ENCODE measurements at regions of chr19 and their contacts with region 1.

Region 1: GRCh38 chr19:39599116-39599515 is 3.2 kb upstream of the LGALS13 start:
- DNase-seq: peak; percentile 23
- H3K4me3 ChIP-seq: no peak overlapping the region
- H3K27ac ChIP-seq: no peak overlapping the region
- H3K4me1 ChIP-seq: no peaks in the 10 kb centered on the region
- H3K27me3 ChIP-seq: no peaks in the 10 kb centered on the region
- CTCF ChIP-seq: no peak

Region 2: DNA sequence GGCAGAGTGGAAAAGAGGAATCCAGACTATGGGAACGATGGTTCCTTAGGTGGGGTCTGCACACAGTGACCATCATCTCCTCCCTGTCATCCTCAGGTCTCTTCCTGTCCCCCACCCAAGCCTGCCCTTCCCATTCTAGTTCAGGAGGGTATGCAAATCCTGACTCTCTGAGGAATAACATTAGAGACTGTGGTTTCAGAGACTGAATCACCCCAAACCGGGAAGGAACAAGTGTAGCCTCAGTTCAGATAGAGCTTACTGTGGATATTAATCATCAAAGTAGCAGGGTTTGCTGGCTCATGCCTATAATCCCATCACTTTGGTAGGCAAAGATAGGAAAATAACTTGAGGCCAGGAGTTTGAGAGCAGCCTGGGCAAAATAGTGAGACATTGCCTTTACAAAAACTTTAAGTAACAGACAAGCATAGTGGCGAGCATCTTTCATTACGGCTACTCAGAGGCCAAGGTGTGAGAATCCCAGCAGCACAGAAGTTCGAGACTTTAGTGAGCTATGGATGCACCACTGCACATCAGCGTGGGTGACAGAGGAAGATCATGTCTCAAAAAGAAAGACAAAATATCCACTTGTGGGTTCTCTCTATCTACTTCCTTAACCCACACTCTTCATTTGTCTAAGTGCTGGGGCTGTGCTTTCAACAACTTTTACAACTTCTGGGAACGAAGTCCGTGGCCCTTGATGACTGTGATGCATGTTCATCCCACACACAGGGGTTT is 16.1 kb before region 1 on chr19:
- CTCF ChIA-PET with region 1: no interaction called
- dilution Hi-C with region 1: no loop called
- in situ Hi-C with region 1: no loop called
- intact Hi-C with region 1: no loop called
- DNase-seq: no peak
- H3K4me3 ChIP-seq: no peak overlapping the region
- H3K27ac ChIP-seq: no peak overlapping the region
- H3K4me1 ChIP-seq: no peaks in the 10 kb centered on the region
- H3K27me3 ChIP-seq: no peaks in the 10 kb centered on the region
- CTCF ChIP-seq: no peak

Region 3: GRCh38 chr19:39641773-39642172 is 42.7 kb after region 1 on chr19:
- CTCF ChIA-PET with region 1: no interaction called
- dilution Hi-C with region 1: no loop called
- in situ Hi-C with region 1: no loop called
- intact Hi-C with region 1: loop called (anchors 5 kb)
- DNase-seq: no peak
- H3K4me3 ChIP-seq: no peak overlapping the region
- H3K27ac ChIP-seq: no peak overlapping the region
- H3K4me1 ChIP-seq: no peaks in the 10 kb centered on the region
- H3K27me3 ChIP-seq: no peaks in the 10 kb centered on the region
- CTCF ChIP-seq: no peak

Region 4: DNA sequence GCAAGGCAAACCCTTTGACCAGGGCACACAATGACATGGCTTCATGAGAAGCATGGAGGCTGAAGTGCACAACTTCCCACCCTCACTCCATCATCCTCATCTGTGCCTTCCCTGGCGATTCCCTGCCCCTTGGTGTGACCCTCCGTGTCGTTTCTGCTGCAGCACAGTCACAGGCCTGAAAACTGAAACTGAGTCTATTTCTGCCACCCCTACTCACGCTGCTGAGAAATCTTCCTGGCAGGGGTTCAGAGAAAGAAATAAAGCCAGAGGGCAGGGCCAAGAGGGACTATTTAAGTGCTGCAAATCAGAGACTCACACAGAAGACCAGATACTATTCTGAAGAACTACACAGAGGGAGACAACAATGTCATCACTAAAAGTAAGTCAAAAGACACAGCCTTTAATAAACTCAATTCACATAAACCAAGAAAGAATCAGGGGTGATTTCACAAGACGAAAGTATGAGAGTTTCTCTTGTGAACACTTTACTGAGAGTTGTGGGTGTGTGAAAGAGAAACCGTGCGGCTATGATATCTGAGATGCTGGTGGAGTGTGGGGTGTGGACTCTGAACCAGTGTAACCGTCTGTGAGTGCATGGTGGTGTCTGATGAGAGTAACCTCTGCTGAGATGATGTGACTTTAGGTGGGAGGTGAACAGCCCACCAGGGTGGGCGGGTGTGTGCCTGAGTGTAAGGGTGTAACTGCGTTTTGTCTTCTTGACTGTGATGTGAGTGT is 80.1 kb after region 1 on chr19:
- CTCF ChIA-PET with region 1: no interaction called
- dilution Hi-C with region 1: loop called (anchors 5 kb)
- in situ Hi-C with region 1: no loop called
- intact Hi-C with region 1: no loop called
- DNase-seq: no peak
- H3K4me3 ChIP-seq: no peak overlapping the region
- H3K27ac ChIP-seq: no peak overlapping the region
- H3K4me1 ChIP-seq: no peaks in the 10 kb centered on the region
- H3K27me3 ChIP-seq: no peaks in the 10 kb centered on the region
- CTCF ChIP-seq: no peak

Region 5: GRCh38 chr19:39696418-39696817 is 97.3 kb after region 1 on chr19:
- CTCF ChIA-PET with region 1: no interaction called
- dilution Hi-C with region 1: no loop called
- in situ Hi-C with region 1: no loop called
- intact Hi-C with region 1: no loop called
- DNase-seq: peak; percentile 24
- H3K4me3 ChIP-seq: no peak overlapping the region
- H3K27ac ChIP-seq: no peak overlapping the region
- H3K4me1 ChIP-seq: no peaks in the 10 kb centered on the region
- H3K27me3 ChIP-seq: peaks cover 3% of the 10 kb centered on the region
- CTCF ChIP-seq: no peak